Transverse colon (tissue), 4 donors: ENCODE measurements at regions of chr12 and their contacts with region 1.

Region 1: DNA sequence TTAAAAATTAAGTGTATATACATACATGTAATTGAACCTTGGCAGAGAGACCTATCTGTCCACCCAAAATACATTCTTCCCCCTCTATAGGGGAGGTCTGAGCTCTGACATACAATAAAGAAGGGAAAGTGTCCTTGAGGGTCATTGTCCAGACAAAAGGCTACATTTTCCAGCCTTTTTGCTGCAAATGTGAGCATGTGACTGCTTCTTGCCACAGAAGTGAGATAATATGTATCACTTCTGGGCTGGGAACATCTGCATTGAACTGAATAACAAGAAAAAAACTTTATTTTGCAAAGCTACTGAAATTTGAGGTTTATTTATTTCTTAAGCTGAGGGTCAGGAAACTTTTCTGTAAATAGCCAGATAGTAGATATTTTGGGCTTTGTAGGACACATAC is 131.3 kb downstream of the TBC1D30 start:
- DNase-seq: no peak
- H3K4me3 ChIP-seq: no peak overlapping the region
- H3K27ac ChIP-seq: no peak overlapping the region
- H3K4me1 ChIP-seq: no peaks in the 10 kb centered on the region
- H3K27me3 ChIP-seq: no peaks in the 10 kb centered on the region
- CTCF ChIP-seq: no peak
- EP300 ChIP-seq: no peak
- POLR2A ChIP-seq: no peak

Region 2: DNA sequence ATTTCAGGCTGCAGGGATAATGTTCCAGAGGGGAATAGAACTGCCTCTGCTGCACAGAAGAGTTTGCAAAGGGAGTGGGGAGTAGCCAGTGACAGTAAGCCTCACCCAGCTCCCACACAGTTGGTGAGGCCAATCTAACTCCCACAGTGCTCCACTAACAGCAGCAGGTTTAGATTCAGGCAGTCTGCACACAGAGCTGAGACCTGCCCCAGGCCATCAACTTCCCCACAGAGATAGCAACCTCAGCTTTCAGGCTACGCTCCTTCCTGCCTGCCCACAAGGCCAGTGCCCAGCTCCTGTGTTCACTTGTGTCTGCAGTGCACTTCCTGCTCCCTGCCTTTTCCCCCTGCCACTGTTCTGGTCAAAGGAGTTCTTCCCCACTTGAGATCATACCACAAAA is 23.8 kb before region 1 on chr12:
- in situ Hi-C with region 1: no loop called
- intact Hi-C with region 1: loop called (anchors 1 kb)
- DNase-seq: no peak
- H3K4me3 ChIP-seq: no peak overlapping the region
- H3K27ac ChIP-seq: no peak overlapping the region
- H3K4me1 ChIP-seq: no peaks in the 10 kb centered on the region
- H3K27me3 ChIP-seq: no peaks in the 10 kb centered on the region
- CTCF ChIP-seq: no peak
- EP300 ChIP-seq: no peak
- POLR2A ChIP-seq: no peak